A673 (cell line): ENCODE measurements at regions of chr11 and their contacts with region 1.

Region 1: DNA sequence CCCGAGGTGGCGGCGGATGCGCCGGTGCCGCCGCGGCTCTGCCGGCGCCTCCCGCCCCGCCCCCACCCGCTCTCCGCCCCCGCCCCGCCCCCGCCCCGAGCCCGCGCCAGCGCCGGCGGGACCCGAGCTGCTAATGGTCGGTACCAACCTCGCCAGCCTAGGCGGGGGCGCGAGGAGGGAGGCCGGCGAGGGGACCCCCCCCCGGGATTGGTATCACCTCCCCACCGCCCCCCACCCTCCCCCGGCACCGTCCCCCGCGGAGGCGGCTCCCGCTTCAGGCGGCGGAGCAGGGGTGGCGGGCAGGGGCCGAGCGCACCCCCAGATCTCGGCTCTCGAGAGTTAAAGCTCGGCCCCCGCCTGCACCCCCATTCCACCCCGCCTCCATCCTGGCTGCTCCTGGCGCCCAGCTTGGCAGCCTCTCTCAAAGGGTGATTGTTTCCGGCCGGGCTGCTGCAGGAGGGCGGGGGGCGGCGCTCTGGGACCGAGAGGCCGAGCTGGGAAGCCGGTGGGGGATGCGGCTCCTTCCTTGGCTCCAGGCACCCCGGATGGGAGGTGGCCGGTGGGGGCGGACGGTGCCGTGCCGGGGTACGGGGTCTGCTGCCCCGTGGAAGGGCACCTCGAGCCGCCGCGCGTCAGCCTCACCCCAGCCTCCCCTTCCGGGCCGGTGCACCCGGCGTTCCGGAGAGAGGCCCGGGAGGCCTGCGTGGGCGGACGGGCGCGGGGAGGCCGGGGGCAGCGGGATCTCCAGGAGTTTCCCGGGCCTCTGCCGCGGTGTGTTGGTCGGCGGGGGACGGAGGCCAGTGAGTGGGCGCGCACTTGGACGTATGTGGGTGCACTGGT is at the start of gene B3GAT1:
- DNase-seq: peak; percentile 35
- H3K4me3 ChIP-seq: peak within 1 kb of the TSS; percentile 48
- H3K27ac ChIP-seq: no peak within 1 kb of the TSS
- H3K4me1 ChIP-seq: peaks cover 7% of the 10 kb centered on the region
- H3K27me3 ChIP-seq: peaks cover 73% of the 10 kb centered on the region
- CTCF ChIP-seq: no peak
- total RNA-seq, gene B3GAT1: 3.7 and 5.5 TPM in 2 replicates

Region 2: GRCh38 chr11:134469627-134470026 is 57.2 kb after region 1 on chr11:
- CTCF ChIA-PET with region 1: no interaction called
- POLR2A ChIA-PET with region 1: no interaction called
- intact Hi-C with region 1: loop called (anchors 5 kb)
- DNase-seq: peak; percentile 16
- H3K4me3 ChIP-seq: no peak overlapping the region
- H3K27ac ChIP-seq: no peak overlapping the region
- H3K4me1 ChIP-seq: peaks cover 5% of the 10 kb centered on the region
- H3K27me3 ChIP-seq: peaks cover 41% of the 10 kb centered on the region
- CTCF ChIP-seq: no peak